ENCODE measurements at regions of chr19 and their contacts with region 1.

Region 1: DNA sequence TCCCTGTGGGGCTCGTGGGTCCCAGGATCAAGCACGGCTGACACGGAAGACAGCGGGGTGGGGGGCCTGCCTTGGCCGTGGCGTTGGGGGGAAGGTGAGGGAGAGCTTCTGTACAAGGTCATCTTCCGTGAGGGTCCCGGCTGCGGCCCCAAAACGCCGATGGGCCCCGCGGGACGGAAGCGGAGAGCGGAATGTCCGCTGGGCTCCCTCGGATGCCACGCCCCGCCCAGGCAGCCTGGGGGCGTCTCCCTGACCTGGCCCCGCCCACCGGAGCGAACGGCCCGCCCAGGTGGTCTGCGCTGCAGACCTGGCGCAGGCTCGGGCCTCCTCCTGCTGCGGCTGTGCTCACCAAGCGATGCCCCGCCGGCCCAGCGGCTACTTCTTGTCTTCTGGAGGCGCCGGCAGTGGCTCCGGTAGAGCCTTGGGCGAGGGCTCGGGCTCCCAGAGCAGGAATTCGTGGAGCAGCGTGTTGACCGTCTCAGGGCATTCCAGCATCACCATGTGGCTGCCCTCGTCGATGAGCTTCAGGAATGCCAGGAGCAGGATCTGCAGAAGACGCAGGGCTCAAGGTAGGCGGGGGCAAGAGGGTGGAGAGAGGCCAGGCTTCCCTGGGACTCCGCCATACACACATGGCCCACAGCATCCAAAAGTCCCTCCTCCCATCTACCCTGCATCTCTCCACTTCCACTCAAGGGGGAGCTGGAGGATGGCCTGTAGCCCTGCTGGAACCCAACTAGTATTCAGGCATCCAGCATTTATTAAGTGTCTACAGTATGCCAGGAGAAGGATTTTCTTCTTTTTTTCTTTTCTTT is 10.7 kb downstream of the ABHD8 start:
- DNase-seq: peak; percentile 87
- ATAC-seq: peak; percentile 97
- H3K4me3 Mint-ChIP-seq: peak overlapping the region; percentile 90
- H3K27ac Mint-ChIP-seq: peak overlapping the region; percentile 85
- H3K4me1 Mint-ChIP-seq: peaks cover 7% of the 10 kb centered on the region
- H3K27me3 Mint-ChIP-seq: no peaks in the 10 kb centered on the region
- CTCF ChIP-seq: peak; percentile 81

Region 2: GRCh38 chr19:17266975-17267788 is 25.3 kb before region 1 on chr19 and contains the start of gene BABAM1:
- CTCF ChIA-PET with region 1: interaction called, 4 read pairs
- POLR2A ChIA-PET with region 1: interaction called, 10 read pairs
- intact Hi-C with region 1: no loop called
- DNase-seq: peak; percentile 99
- ATAC-seq: peak; percentile 95
- H3K4me3 Mint-ChIP-seq: peak within 1 kb of the TSS; percentile 95
- H3K27ac Mint-ChIP-seq: peak within 1 kb of the TSS; percentile 90
- H3K4me1 Mint-ChIP-seq: peaks cover 15% of the 10 kb centered on the region
- H3K27me3 Mint-ChIP-seq: no peaks in the 10 kb centered on the region
- CTCF ChIP-seq: no peak
- total RNA-seq, gene BABAM1: 105 to 106 TPM

Region 3: DNA sequence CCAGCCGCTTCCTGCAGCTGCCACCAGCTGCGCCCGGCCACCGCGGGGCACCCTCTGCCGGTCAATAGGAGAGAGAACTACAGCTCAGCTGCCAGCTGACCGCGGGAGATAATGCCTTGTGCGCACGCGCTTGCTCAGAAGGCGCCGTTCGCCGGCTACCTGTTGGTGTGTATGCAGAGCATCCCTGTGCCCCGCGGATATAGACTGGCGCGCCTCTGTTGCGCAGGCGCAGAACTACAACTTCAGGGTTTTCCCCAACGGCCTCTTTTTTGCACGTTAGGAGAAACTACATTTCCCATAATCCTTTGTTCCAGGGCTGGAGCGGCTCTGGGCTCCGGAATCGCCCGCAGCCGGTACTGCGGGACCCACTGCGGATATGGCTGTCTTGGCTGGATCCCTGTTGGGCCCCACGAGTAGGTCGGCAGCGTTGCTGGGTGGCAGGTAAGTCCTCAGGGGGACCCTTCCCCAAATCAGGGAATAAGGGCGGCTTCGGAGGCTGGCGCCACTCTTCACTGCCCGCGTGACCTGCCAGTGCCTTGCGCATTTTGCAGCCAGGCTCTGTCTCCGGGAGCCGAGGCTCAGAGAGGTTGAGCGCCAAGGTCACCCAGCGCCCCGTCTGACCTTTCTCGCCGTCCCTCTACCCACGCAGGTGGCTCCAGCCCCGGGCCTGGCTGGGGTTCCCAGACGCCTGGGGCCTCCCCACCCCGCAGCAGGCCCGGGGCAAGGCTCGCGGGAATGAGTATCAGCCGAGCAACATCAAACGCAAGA is 13.2 kb after region 1 on chr19 and contains the start of gene MRPL34:
- CTCF ChIA-PET with region 1: interaction called, 27 read pairs
- POLR2A ChIA-PET with region 1: interaction called, 28 read pairs
- intact Hi-C with region 1: no loop called
- DNase-seq: peak; percentile 98
- ATAC-seq: peak; percentile 68
- H3K4me3 Mint-ChIP-seq: peak within 1 kb of the TSS; percentile 87
- H3K27ac Mint-ChIP-seq: peak within 1 kb of the TSS; percentile 92
- H3K4me1 Mint-ChIP-seq: peaks cover 37% of the 10 kb centered on the region
- H3K27me3 Mint-ChIP-seq: no peaks in the 10 kb centered on the region
- CTCF ChIP-seq: peak; percentile 81
- total RNA-seq, gene MRPL34: 101 to 107 TPM

Region 4: GRCh38 chr19:17358395-17358794 is 65.9 kb after region 1 on chr19:
- CTCF ChIA-PET with region 1: no interaction called
- POLR2A ChIA-PET with region 1: no interaction called
- intact Hi-C with region 1: no loop called
- DNase-seq: no peak
- ATAC-seq: no peak
- H3K4me3 Mint-ChIP-seq: no peak overlapping the region
- H3K27ac Mint-ChIP-seq: no peak overlapping the region
- H3K4me1 Mint-ChIP-seq: no peaks in the 10 kb centered on the region
- H3K27me3 Mint-ChIP-seq: no peaks in the 10 kb centered on the region
- CTCF ChIP-seq: no peak

Region 5: GRCh38 chr19:17411801-17412200 is 119.3 kb after region 1 on chr19:
- CTCF ChIA-PET with region 1: no interaction called
- POLR2A ChIA-PET with region 1: no interaction called
- intact Hi-C with region 1: no loop called
- DNase-seq: no peak
- ATAC-seq: no peak
- H3K4me3 Mint-ChIP-seq: no peak overlapping the region
- H3K27ac Mint-ChIP-seq: no peak overlapping the region
- H3K4me1 Mint-ChIP-seq: peaks cover 14% of the 10 kb centered on the region
- H3K27me3 Mint-ChIP-seq: no peaks in the 10 kb centered on the region
- CTCF ChIP-seq: no peak